IMR-90 (cell line): ENCODE measurements at regions of chr7 and their contacts with region 1.

Region 1: GRCh38 chr7:104923010-104923421 is 91.0 kb upstream of the KMT2E start:
- DNase-seq: peak; percentile 88
- ATAC-seq: peak; percentile 86
- H3K4me3 ChIP-seq: no peak overlapping the region
- H3K27ac ChIP-seq: no peak overlapping the region
- H3K4me1 ChIP-seq: peaks cover 10% of the 10 kb centered on the region; the same call in 1 of the 2 replicates
- H3K27me3 ChIP-seq: no peaks in the 10 kb centered on the region; the same call in 1 of the 2 replicates
- CTCF ChIP-seq: peak; percentile 83
- POLR2A ChIP-seq: 0 out of 2 replicates have a peak, but pooled peaks have one; percentile 35
- RAD21 ChIP-seq: peak; percentile 92

Region 2: GRCh38 chr7:104231054-104232046 is 691.7 kb before region 1 on chr7:
- CTCF ChIA-PET with region 1: interaction called, 3 read pairs
- POLR2A ChIA-PET with region 1: no interaction called
- dilution Hi-C with region 1: no loop called
- in situ Hi-C with region 1: no loop called
- intact Hi-C with region 1: loop called (anchors 5 kb)
- DNase-seq: peak; percentile 58
- ATAC-seq: peak; percentile 100
- H3K4me3 ChIP-seq: no peak overlapping the region
- H3K27ac ChIP-seq: no peak overlapping the region
- H3K4me1 ChIP-seq: no peaks in the 10 kb centered on the region
- H3K27me3 ChIP-seq: 0 out of 2 replicates have a peak, but pooled peaks cover 2% of the 10 kb centered on the region
- CTCF ChIP-seq: peak; percentile 76
- POLR2A ChIP-seq: no peak
- RAD21 ChIP-seq: peak; percentile 69

Region 3: DNA sequence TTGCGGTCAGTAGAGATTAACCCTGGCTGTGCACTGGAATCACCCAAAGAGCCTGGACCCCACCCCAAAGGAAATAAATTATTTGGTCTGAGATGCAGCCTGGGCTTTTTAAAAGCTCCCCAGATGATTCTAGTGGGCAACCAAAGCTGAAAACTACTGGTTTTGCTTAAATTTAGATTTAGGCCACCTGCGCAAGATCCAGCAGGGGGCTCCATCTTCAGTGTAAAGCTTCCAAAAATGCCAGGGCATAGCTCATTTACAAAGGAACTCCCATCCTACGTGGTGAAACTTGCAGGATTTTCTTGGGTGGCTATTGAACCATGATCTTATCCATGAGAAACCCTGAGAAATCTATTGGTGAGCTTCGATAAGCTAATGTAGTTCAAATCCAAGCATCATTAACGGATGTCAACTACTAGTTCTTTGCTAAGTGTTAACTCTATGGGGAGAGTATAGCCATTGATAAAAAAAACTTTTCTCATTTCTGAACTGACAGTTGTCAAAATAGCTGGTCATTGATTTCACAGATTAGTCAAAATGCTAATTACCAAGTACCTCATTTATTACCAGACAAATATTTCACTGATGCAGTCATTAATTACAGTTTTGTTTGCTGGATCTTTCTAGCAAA is 279.3 kb before region 1 on chr7:
- CTCF ChIA-PET with region 1: interaction called, 6 read pairs
- POLR2A ChIA-PET with region 1: no interaction called
- dilution Hi-C with region 1: no loop called
- in situ Hi-C with region 1: no loop called
- intact Hi-C with region 1: loop called (anchors 5 kb)
- DNase-seq: no peak
- ATAC-seq: no peak
- H3K4me3 ChIP-seq: no peak overlapping the region
- H3K27ac ChIP-seq: no peak overlapping the region
- H3K4me1 ChIP-seq: no peaks in the 10 kb centered on the region
- H3K27me3 ChIP-seq: no peaks in the 10 kb centered on the region
- CTCF ChIP-seq: peak; percentile 44
- POLR2A ChIP-seq: no peak
- RAD21 ChIP-seq: peak; percentile 37

Region 4: DNA sequence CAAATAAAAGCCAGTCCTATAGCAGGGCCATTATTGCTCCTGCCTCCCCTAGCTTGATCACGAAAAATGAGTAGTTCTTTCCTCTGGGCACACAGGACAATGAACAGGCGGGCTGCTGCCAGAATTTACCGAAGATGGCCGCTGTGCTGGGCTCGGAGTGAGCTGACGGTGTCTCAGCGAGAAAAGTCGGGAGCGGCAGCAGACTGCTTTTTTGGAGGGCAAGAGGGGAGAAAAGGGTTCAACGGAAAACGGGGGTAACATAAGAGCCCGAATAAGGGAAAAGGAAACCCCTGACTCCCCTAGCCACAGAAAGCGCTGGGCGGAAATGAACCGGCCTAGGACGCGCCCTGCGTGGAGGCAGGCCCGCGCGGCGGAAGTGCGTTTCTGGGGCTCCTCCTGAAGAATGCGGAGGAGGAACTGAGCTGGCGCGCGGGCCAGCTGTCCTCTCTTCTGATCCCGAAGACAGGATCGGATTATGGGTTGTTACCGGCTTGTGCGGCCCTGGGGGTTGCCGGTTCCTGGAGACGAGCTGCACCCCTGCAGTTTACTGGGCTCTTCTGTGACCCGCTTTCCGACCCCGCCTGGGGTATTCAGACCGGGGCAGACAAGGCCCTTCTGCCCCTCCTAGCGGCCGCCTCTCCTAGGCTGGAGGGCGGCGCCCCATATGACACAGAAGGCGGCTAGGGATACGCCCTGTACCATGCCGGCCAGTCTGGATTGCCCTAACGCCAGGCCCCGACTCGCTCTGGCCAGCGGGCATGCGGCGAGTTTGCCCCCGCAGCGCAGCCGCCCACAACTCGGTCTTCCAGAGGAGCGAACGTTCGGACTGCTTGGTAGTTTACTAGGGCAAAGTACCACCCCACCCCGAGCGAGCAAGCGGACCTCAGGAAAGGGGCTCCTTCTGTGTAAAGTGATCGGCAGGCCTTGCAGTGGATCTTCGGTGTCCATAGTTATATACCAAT is 60.8 kb after region 1 on chr7:
- CTCF ChIA-PET with region 1: interaction called, 7 read pairs
- POLR2A ChIA-PET with region 1: no interaction called
- dilution Hi-C with region 1: no loop called
- in situ Hi-C with region 1: no loop called
- intact Hi-C with region 1: loop called (anchors 2 kb)
- DNase-seq: peak; percentile 81
- ATAC-seq: peak; percentile 92
- H3K4me3 ChIP-seq: peak overlapping the region; percentile 74
- H3K27ac ChIP-seq: peak overlapping the region; percentile 97
- H3K4me1 ChIP-seq: peaks cover 16% of the 10 kb centered on the region
- H3K27me3 ChIP-seq: no peaks in the 10 kb centered on the region
- CTCF ChIP-seq: peak; percentile 49
- POLR2A ChIP-seq: peak; percentile 93
- RAD21 ChIP-seq: peak; percentile 20; the same call in 1 of the 2 replicates

Region 5: DNA sequence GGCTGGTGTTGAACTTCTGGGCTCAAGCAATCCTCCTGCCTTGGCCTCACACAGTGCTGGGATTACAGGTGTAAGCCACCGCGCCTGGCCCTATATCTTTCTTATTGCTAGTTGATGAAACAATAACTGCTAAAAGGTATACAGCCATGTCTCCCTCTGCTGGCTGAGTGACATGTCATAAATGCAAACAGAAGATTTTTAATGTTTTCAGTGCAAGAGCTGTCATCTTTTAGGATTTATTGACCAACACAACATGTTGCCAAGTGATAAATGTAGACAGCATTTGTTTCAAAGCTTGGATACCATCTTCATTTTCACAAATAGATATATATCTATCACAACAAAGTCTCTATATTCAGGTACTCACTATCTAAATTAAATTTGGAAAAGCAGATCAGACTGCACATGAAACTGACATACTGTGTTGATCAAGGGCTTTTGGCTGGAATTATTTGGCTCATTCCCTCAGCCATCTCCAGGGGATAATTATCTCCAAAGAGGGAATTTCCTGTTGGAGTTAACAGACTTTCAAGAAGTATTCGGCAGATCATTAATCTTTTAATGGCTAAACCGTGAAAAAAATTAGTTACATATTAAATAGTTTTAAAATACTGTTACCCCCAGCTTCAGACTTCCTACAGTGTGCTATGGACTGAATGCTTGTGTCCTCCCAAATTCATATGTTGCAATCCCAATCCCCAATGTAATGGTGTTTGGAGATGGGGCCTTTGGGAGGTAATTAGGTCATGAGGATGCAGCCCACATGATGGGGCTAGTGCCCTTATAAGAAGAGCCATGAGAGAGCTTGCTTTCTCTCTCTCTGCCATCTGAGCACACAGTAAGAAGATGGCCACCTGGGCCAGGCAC is 507.0 kb after region 1 on chr7:
- CTCF ChIA-PET with region 1: no interaction called
- POLR2A ChIA-PET with region 1: no interaction called
- dilution Hi-C with region 1: no loop called
- in situ Hi-C with region 1: no loop called
- intact Hi-C with region 1: loop called (anchors 1 kb)
- DNase-seq: peak; percentile 47
- ATAC-seq: peak; percentile 46
- H3K4me3 ChIP-seq: no peak overlapping the region
- H3K27ac ChIP-seq: no peak overlapping the region
- H3K4me1 ChIP-seq: no peaks in the 10 kb centered on the region
- H3K27me3 ChIP-seq: no peaks in the 10 kb centered on the region
- CTCF ChIP-seq: peak; percentile 53
- POLR2A ChIP-seq: no peak
- RAD21 ChIP-seq: peak; percentile 49